ENCODE measurements at regions of chr2 and their contacts with region 1.

Region 1: DNA sequence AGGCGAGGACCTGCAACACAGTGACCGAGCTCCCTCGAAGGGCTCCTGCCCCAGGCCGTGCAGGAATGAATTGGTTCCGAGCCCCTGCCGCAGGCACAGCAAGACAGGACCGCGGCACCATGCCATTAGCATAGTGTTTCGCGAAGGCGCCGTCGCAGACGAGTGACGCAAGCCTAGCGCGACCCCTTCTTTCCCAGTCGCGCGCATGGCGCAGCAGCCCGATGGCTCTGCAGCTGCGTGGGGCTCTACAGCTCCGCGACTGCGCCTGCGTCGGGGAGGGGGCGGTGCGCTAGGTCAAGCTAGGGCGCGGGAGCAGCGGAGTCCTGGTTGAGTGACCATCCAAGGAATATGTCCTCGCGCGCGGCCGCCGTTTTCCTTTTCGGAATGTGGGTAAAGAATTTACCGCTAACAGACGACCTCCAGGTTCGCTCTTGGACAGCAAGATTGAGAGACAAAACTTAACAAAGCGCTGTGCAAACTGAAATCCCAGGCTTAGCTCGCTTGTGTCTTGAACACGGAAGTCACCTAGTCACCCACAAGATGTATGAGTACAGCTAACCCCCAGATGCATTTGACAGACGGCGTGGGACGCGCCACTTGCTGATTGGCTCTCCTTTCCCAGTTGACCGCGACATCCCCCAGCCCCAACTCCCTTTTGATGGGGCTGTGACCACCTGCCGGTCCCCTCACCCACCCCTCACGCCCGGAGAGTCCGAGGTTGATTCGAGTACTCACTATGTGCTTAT is at the start of gene TRMT61B:
- DNase-seq: peak; percentile 93 to 98 (median 96)
- ATAC-seq: peak; percentile 93
- H3K4me3 Mint-ChIP-seq: peak within 1 kb of the TSS; percentile 93 to 100 (median 96)
- H3K27ac Mint-ChIP-seq: peak within 1 kb of the TSS; percentile 97 to 100 (median 100)
- H3K4me1 Mint-ChIP-seq: peaks cover 12 to 44% (median 36%) of the 10 kb centered on the region in 4 donors
- H3K27me3 Mint-ChIP-seq: peaks cover 0 to 2% (median 0%) of the 10 kb centered on the region in 5 donors
- polyA plus RNA-seq, gene TRMT61B: 17.0 to 21.5 (median 19.5) TPM

Region 2: GRCh38 chr2:28894470-28895177 is 24.3 kb after region 1 on chr2 and contains the start of gene WDR43:
- POLR2A ChIA-PET with region 1: interaction called, 94 read pairs
- DNase-seq: peak; percentile 95 to 99 (median 98)
- ATAC-seq: peak; percentile 92 to 95
- H3K4me3 Mint-ChIP-seq: peak within 1 kb of the TSS; percentile 91 to 99 (median 98)
- H3K27ac Mint-ChIP-seq: peak within 1 kb of the TSS; percentile 88 to 97 (median 94)
- H3K4me1 Mint-ChIP-seq: peaks cover 20 to 47% (median 44%) of the 10 kb centered on the region in 4 donors
- H3K27me3 Mint-ChIP-seq: no peaks in the 10 kb centered on the region
- polyA plus RNA-seq, gene WDR43: 35.1 to 44.8 (median 37.6) TPM